BJ (cell line): ENCODE measurements at regions of chr9 and their contacts with region 1.

Region 1: GRCh38 chr9:21381448-21382339 is 3.5 kb downstream of the IFNA2 start:
- DNase-seq: no peak
- H3K4me3 ChIP-seq: no peak overlapping the region
- H3K27me3 ChIP-seq: peaks cover 7% of the 10 kb centered on the region
- CTCF ChIP-seq: no peak

Region 2: DNA sequence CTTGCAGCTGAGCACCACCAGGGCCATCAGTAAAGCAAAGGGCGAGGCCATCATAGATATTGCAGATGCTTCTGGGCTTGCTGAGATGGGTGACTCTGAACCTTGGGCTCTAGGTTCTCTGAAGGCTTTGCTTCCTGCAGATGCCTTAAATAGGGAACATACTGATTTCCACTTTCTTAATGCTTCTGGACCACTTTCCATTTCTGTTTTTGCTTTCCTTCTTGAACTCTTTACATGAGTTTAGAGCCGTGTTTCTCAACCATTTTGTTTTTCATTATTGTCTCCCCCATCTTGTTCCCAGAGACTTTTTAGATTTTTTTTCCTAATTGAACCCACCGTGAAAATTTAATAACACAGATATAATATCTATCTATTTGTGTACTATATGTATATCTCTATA is 13.7 kb before region 1 on chr9 and contains the start of gene IFNA13:
- CTCF ChIA-PET with region 1: no interaction called
- POLR2A ChIA-PET with region 1: no interaction called
- DNase-seq: no peak
- H3K4me3 ChIP-seq: no peak within 1 kb of the TSS
- H3K27me3 ChIP-seq: peaks cover 2% of the 10 kb centered on the region; the same call in 1 of the 2 replicates
- CTCF ChIP-seq: no peak
- polyA plus RNA-seq, gene IFNA13: not detected in 2 replicates

Region 3: DNA sequence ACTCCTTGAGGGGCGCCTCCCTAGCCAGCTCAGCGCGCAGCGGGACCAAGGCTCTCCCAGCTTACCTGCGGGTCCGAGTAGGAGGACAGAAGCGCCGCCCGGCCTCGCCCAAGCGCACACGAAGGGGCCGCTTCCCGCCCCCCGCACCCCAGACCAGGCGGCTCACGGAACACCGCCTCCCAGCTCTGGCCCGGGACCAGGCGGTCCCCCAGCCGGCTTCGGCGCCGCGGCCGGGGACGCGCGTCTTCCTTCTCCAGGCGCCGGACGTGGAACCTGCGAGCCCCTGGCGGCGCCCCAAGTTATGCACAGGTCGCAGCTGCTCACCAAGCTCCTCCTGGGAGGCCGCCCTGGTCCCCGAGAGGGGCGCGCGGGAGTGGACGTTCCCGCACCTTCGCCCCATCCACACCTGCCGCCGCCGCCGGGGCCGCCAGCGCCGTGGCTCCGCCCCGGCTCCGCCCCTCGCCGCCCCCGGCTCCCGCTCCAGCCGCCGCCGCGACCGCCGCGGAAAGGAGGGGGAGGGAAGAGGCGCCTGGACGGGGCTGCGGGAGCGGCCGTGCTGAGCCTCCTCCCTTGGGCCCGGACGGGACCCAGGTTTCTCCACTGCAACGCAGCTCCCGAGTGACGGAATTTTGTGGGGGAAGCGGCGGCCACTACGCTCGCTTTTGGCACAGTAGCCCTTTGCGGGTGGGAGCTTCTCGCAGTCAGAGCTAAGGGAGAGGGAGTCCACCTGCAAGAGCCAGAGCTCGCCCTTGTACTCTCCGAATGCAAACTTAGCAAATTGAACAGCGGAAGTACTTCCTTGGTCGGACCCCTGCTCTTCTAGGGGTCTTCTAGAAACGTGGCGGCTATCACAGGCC is 178.0 kb after region 1 on chr9:
- CTCF ChIA-PET with region 1: no interaction called
- POLR2A ChIA-PET with region 1: interaction called, 11 read pairs
- DNase-seq: no peak
- H3K4me3 ChIP-seq: peak overlapping the region; percentile 89
- H3K27me3 ChIP-seq: no peaks in the 10 kb centered on the region
- CTCF ChIP-seq: no peak

Region 4: GRCh38 chr9:21591221-21592062 is 209.7 kb after region 1 on chr9:
- CTCF ChIA-PET with region 1: no interaction called
- POLR2A ChIA-PET with region 1: no interaction called
- DNase-seq: peak; percentile 92
- H3K4me3 ChIP-seq: peak overlapping the region; percentile 1; the same call in 1 of the 2 replicates
- H3K27me3 ChIP-seq: no peaks in the 10 kb centered on the region
- CTCF ChIP-seq: no peak